CD8-positive, alpha-beta T cell (primary cell): ENCODE measurements at regions of chr22 and their contacts with region 1.

Region 1: GRCh38 chr22:45163451-45164269 is at the start of gene NUP50:
- DNase-seq: peak; percentile 92 to 99 (median 96)
- ATAC-seq: peak; percentile 83
- H3K4me3 ChIP-seq: peak within 1 kb of the TSS; percentile 86 to 90
- H3K4me3 Mint-ChIP-seq: peak within 1 kb of the TSS; percentile 92
- H3K27ac ChIP-seq: peak within 1 kb of the TSS; percentile 86 to 88
- H3K27ac Mint-ChIP-seq: peak within 1 kb of the TSS; percentile 93
- H3K4me1 ChIP-seq: peaks cover 38% of the 10 kb centered on the region
- H3K4me1 Mint-ChIP-seq: peaks cover 65% of the 10 kb centered on the region
- H3K27me3 ChIP-seq: no peaks in the 10 kb centered on the region
- H3K27me3 Mint-ChIP-seq: no peaks in the 10 kb centered on the region
- CTCF ChIP-seq: no peak
- total RNA-seq, gene NUP50: 133 to 134 TPM

Region 2: DNA sequence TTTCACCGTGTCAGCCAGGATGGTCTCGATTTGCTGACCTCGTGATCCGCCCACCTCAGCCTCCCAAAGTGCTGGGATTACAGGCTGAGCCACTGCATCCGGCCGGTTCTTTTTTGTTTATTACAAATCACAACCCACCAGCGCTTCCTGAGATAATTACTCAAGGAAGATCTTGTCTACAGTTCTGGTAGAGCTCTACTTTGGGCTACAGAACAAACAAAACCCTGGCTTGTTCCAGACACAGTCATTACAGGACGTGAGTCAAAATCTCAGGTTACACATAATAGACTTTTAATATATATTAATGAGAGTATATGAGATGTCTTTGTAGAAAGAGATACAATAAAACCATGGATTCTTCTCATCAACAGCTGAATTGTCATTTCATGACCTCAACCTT is 42.7 kb before region 1 on chr22:
- CTCF ChIA-PET with region 1: no interaction called
- POLR2A ChIA-PET with region 1: no interaction called
- intact Hi-C with region 1: no loop called
- DNase-seq: no peak
- ATAC-seq: no peak
- H3K4me3 ChIP-seq: no peak overlapping the region
- H3K4me3 Mint-ChIP-seq: no peak overlapping the region
- H3K27ac ChIP-seq: no peak overlapping the region
- H3K27ac Mint-ChIP-seq: no peak overlapping the region
- H3K4me1 ChIP-seq: no peaks in the 10 kb centered on the region
- H3K4me1 Mint-ChIP-seq: no peaks in the 10 kb centered on the region
- H3K27me3 ChIP-seq: no peaks in the 10 kb centered on the region
- H3K27me3 Mint-ChIP-seq: no peaks in the 10 kb centered on the region
- CTCF ChIP-seq: no peak

Region 3: DNA sequence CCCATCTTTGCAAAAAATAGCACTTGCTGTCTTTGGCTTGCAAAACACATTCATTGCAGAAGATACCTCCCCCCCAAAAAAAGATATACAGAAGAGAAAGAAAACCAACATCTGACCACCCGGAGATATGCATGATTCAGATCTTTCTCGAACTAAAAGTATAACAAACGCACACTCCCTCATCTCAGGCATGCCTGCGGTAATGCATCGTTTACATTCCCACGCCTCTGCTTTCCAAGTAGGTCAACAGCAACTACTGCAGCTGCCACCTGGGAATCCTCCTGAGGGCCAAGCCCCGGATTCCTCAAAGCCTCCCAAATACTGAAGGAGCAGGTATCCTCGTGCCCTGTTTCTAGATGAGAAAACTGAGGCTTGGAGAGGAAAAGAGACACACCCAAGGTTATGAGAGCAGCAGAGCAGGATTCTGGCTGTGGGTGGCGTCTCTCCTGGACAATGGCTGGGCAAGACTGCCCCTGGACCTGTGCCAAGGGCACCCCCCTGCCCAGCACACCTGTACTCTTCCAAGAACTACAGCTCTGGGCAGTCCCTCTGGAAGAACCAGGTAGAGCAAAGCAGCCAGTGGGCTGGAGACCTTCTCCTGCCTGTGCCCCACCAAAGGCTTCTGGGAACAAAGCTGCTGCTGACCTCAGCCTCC is 38.1 kb after region 1 on chr22:
- CTCF ChIA-PET with region 1: no interaction called
- POLR2A ChIA-PET with region 1: no interaction called
- intact Hi-C with region 1: no loop called
- DNase-seq: no peak
- ATAC-seq: no peak
- H3K4me3 ChIP-seq: no peak overlapping the region
- H3K4me3 Mint-ChIP-seq: no peak overlapping the region
- H3K27ac ChIP-seq: no peak overlapping the region
- H3K27ac Mint-ChIP-seq: no peak overlapping the region
- H3K4me1 ChIP-seq: no peaks in the 10 kb centered on the region
- H3K4me1 Mint-ChIP-seq: no peaks in the 10 kb centered on the region
- H3K27me3 ChIP-seq: no peaks in the 10 kb centered on the region
- H3K27me3 Mint-ChIP-seq: no peaks in the 10 kb centered on the region
- CTCF ChIP-seq: no peak

Region 4: GRCh38 chr22:45240810-45241631 is 77.4 kb after region 1 on chr22 and contains the start of gene KIAA0930:
- CTCF ChIA-PET with region 1: interaction called, 3 read pairs
- POLR2A ChIA-PET with region 1: interaction called, 3 read pairs
- intact Hi-C with region 1: loop called (anchors 1 to 2 kb)
- DNase-seq: peak; percentile 73 to 93 (median 82)
- ATAC-seq: peak; percentile 75
- H3K4me3 ChIP-seq: peak within 1 kb of the TSS; percentile 70 to 76
- H3K4me3 Mint-ChIP-seq: peak within 1 kb of the TSS; percentile 91
- H3K27ac ChIP-seq: peak within 1 kb of the TSS; percentile 20 to 75
- H3K27ac Mint-ChIP-seq: peak within 1 kb of the TSS; percentile 87
- H3K4me1 ChIP-seq: peaks cover 28% of the 10 kb centered on the region
- H3K4me1 Mint-ChIP-seq: peaks cover 47% of the 10 kb centered on the region
- H3K27me3 ChIP-seq: no peaks in the 10 kb centered on the region
- H3K27me3 Mint-ChIP-seq: no peaks in the 10 kb centered on the region
- CTCF ChIP-seq: no peak
- total RNA-seq, gene KIAA0930: 6.6 to 11.7 TPM

Region 5: DNA sequence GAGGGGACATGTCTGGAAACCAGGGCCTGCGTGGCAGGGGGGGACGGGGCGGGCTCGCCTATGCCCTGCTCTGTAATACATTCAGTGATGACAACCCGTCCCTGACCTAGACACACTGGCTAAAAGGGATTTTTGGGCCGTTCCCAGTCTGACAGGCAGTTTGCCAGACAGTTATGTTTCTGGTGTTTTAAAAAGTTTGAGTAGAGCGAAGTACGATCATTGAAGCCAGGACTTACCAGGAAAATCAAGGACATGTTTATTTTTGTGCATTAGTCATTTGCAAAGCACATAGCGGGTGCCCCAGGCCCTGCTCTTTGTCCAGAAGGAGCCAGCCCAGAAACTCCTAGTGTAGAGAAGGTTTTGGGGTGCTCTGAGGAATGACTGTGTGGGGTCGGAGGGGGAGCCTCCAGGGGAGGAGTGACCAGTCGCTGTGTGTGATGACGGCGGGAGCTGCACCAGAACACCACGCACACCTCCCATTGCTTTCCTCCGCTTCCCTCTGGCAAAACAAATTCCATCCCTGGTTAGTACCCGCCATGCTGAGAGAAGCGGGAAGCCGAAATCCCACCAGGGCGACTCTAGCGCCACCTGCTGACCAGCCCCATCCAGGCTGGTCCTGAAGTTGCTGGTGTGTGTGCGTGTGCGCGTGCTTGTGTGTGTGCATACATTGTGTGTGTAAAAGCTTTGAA is 389.8 kb after region 1 on chr22:
- CTCF ChIA-PET with region 1: no interaction called
- POLR2A ChIA-PET with region 1: no interaction called
- intact Hi-C with region 1: loop called in 1 of 2 experiments (anchors 5 kb)
- DNase-seq: peak in 8 of 9 experiments; percentile 22 to 60 (median 51)
- ATAC-seq: no peak
- H3K4me3 ChIP-seq: no peak overlapping the region
- H3K4me3 Mint-ChIP-seq: no peak overlapping the region
- H3K27ac ChIP-seq: no peak overlapping the region
- H3K27ac Mint-ChIP-seq: no peak overlapping the region
- H3K4me1 ChIP-seq: no peaks in the 10 kb centered on the region
- H3K4me1 Mint-ChIP-seq: no peaks in the 10 kb centered on the region
- H3K27me3 ChIP-seq: no peaks in the 10 kb centered on the region
- H3K27me3 Mint-ChIP-seq: peaks cover 4% of the 10 kb centered on the region
- CTCF ChIP-seq: peak; percentile 52